ENCODE measurements at regions of chr3 and their contacts with region 1.

Region 1: DNA sequence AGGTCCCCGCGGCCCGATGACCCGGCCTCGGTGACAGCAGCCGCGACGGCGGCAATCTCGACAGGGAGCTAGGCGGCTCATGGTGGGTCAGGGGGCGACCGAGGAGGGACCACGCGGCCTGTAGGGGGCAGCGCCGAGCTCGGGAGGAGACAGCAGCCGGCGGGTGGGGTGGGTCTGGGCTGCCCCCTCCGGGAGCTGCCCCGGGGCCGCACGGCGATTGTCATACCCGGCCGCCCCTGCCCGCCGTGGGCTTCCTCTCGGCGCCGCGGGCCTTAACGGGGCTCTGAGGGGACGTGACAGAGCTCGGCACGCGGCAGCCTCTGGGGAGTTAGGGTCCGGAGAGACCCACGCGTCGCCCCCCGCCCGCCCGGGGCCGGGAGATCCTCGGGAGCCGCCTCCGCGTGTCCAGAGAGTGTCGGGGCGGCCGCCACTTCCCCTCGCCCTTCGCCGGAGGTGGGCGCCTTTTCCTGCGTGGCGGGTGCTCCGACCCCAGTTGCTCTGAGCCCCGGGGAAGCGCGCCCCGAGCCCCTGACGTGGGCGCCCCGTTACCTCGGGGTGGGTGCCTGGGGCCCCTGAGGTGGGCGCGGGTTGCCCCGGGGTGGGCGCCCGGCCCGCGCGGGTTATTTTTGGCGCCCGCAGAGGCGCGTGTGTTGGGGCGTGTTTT is 539 bp upstream of the PLCL2 start:
- DNase-seq: peak; percentile 84
- H3K4me3 Mint-ChIP-seq: peak overlapping the region; percentile 93
- H3K27ac Mint-ChIP-seq: peak overlapping the region; percentile 93
- H3K4me1 Mint-ChIP-seq: peaks cover 23% of the 10 kb centered on the region
- H3K27me3 Mint-ChIP-seq: no peaks in the 10 kb centered on the region

Region 2: DNA sequence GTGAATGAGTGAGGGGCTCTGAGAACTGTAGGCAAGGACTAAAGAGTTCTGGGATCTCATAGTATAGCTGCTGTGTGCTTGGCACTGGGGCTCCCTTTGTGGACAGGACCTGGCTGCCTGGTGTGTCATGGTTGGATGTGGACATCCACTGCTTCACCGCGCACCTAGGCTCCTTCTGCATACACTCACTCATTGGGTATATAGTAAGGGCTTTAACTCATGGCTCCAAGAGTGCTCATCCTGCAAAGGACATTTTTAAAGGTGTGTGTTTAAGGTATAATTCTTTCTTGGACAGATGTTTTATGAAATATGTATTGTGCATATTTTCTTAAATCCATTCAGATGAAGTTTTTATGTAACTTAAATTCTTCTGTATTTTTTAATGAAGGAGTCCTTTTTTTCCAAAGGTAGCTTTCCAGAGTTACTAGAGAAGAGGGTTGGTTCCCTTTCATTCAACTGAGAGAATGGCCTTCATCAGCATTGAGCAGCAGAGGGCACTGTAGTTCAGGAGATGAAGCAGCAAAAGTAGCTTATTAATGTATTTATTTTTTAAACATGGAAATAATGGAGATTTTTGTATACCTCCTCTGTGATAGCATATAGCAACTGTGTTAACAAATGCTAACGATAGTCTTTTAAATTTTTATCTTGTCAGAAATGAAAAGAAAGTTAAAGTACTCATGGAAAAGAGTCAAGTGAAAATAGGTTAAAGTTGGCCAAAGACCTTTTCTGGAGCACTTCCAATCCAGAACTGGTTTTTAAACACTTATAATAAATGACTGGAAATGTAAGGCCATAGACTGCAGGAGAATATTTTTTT is 594.0 kb before region 1 on chr3:
- CTCF ChIA-PET with region 1: no interaction called
- POLR2A ChIA-PET with region 1: no interaction called
- intact Hi-C with region 1: loop called (anchors 5 kb)
- DNase-seq: peak; percentile 70
- H3K4me3 Mint-ChIP-seq: peak overlapping the region; percentile 45
- H3K27ac Mint-ChIP-seq: peak overlapping the region; percentile 85
- H3K4me1 Mint-ChIP-seq: peaks cover 89% of the 10 kb centered on the region
- H3K27me3 Mint-ChIP-seq: no peaks in the 10 kb centered on the region

Region 3: DNA sequence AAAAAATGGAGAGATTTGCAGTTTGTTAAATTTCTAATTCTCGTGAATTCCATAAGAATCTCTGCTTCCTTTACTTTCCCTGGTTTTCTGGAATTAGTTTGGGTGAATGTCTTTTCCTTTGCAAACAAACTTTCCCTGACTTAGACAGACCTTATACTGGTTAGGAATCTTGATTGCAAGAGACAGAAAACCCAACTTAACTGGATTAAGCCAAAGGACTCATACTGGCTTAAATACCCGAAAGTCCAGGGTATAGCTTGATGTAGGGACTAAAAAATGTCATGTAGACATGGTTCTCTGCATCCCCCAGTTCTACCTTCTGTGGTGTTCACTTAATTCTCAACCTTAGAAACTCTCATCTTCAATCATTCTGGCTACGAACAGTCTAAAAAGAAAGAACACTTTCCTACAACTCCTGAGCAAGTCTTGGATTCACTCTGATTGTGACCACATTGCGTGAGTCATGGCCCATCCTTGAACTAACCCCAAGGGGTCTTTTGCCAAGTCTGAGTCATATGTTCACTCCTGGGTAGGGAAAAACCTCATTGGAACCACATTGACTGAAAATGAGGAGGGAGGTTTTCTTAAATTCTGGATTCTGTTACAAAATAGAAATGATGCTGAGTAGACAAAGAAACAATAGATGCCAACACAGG is 143.0 kb before region 1 on chr3:
- CTCF ChIA-PET with region 1: no interaction called
- POLR2A ChIA-PET with region 1: no interaction called
- intact Hi-C with region 1: no loop called
- DNase-seq: peak; percentile 38
- H3K4me3 Mint-ChIP-seq: no peak overlapping the region
- H3K27ac Mint-ChIP-seq: no peak overlapping the region
- H3K4me1 Mint-ChIP-seq: peaks cover 6% of the 10 kb centered on the region
- H3K27me3 Mint-ChIP-seq: peaks cover 2% of the 10 kb centered on the region

Region 4: DNA sequence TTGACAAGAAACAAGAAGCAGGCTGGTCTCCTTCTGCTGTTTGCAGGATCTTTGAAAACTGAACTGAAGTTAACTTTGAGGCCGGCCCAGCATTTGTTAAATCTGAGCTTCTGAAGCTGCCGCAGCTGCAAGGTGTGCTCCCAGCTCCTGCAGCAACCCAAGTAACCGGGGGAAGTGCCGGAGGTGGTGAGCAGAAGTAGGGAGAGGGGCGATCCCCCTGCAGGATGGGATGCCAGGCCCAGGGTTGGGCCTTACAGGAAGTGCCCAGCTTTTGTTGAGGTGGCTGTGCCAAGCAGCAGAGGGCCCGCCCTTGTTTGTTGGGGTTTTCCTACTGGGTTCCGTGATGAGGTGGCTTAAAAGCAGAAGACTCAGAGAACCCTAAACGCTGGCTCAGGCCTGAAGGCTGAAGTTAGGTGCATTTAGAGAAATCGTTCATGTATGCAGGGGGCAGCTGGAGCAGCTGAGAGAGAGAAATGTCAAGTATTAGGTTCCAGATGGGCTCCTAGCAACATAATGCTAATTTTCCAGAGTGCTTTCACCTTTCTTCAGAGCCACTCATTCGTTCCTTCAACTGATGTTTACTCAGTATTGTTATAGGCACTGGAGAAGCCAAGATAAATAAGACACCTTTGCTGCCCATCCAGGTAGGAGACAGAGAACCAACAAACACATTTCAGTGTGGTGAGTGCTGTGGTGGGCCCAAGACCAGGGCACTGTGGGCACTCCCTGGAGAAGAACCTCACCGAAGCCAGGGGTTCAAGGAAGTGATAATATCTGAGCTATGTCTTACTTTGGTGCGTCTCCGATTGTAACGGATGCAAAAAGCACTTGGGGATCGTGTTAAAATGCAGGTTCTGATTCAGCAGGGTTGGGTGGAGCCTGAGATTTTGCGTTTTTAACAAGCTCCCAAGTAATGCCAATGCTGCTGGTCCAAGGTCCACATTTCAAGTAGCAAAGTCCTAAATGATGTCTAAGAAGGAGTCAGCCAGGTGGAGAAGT is 41.6 kb before region 1 on chr3:
- CTCF ChIA-PET with region 1: interaction called, 25 read pairs
- POLR2A ChIA-PET with region 1: interaction called, 9 read pairs
- intact Hi-C with region 1: loop called (anchors 1 kb)
- DNase-seq: peak; percentile 89
- H3K4me3 Mint-ChIP-seq: peak overlapping the region; percentile 67
- H3K27ac Mint-ChIP-seq: peak overlapping the region; percentile 91
- H3K4me1 Mint-ChIP-seq: peaks cover 80% of the 10 kb centered on the region
- H3K27me3 Mint-ChIP-seq: no peaks in the 10 kb centered on the region

Region 5: DNA sequence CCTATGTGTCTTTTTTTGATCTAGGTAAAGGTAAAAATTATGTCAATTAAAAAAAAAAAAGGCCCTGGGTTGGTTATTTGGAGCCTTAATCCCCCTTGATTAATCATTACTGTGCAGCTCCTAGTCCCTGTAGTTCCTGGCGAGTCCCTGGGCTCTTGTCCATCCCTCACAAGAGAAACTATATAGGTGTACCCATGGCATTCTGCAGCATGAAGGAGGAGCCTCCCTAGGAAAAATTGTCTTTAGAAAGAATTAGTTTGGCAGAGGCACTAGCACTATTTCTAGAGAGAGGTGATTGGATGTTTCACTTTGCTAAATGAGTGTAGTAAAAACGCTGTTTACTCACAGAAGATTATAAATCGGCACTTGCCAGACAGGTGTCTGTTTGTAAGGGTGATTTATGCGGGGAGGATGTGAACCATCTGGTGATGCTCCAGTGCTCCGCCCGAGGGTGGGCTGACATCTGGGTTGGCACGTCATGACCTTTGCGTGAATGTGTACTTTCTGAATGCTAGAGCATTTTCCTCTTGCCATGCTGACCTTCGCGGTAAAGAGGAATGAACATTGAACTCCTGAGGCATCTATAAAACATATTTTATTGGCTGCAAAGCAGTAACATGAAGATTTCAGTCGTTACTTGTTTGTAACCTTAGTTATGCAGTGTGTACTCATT is 13.2 kb after region 1 on chr3:
- CTCF ChIA-PET with region 1: interaction called, 6 read pairs
- POLR2A ChIA-PET with region 1: interaction called, 8 read pairs
- intact Hi-C with region 1: loop called (anchors 1 kb)
- DNase-seq: peak; percentile 55
- H3K4me3 Mint-ChIP-seq: peak overlapping the region; percentile 26
- H3K27ac Mint-ChIP-seq: peak overlapping the region; percentile 57
- H3K4me1 Mint-ChIP-seq: peaks cover 86% of the 10 kb centered on the region
- H3K27me3 Mint-ChIP-seq: no peaks in the 10 kb centered on the region

Region 6: DNA sequence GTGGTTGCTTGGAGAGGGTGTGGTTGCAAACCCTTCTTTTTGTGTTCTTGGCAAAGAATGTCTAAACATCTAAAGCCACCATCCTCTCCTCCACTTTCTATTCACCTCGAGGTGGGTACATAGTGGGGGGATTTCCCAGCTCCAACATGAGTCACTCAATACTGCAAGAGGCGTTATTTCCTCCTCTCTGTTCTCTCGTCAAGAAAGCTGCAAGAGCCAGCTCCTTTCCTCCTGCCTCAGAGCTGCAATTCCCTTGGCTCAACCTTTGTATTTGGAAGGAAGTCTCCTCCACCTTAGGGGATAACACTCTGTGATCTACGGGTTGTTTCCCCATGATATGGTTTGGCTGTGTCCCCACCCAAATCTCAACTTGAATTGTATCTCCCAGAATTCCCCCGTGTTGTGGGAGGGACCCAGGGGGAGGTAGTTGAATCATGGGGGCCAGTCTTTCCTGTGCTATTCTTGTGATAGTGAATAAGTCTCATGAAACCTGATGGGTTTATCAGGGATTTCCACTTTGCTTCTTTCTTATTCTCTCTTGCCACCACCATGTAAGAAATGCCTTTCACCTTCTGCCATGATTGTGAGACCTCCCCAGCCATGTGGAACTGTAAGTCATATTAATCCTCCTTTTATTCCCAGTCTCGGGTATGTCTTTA is 138.9 kb after region 1 on chr3:
- CTCF ChIA-PET with region 1: interaction called, 20 read pairs
- POLR2A ChIA-PET with region 1: no interaction called
- intact Hi-C with region 1: loop called (anchors 2 kb)
- DNase-seq: peak; percentile 72
- H3K4me3 Mint-ChIP-seq: peak overlapping the region; percentile 52
- H3K27ac Mint-ChIP-seq: peak overlapping the region; percentile 87
- H3K4me1 Mint-ChIP-seq: peaks cover 73% of the 10 kb centered on the region
- H3K27me3 Mint-ChIP-seq: no peaks in the 10 kb centered on the region

Region 7: GRCh38 chr3:17233398-17233800 is 349.2 kb after region 1 on chr3:
- CTCF ChIA-PET with region 1: interaction called, 23 read pairs
- POLR2A ChIA-PET with region 1: no interaction called
- intact Hi-C with region 1: loop called (anchors 1 kb)
- DNase-seq: peak; percentile 25
- H3K4me3 Mint-ChIP-seq: no peak overlapping the region
- H3K27ac Mint-ChIP-seq: no peak overlapping the region
- H3K4me1 Mint-ChIP-seq: peaks cover 21% of the 10 kb centered on the region
- H3K27me3 Mint-ChIP-seq: no peaks in the 10 kb centered on the region

Region 8: DNA sequence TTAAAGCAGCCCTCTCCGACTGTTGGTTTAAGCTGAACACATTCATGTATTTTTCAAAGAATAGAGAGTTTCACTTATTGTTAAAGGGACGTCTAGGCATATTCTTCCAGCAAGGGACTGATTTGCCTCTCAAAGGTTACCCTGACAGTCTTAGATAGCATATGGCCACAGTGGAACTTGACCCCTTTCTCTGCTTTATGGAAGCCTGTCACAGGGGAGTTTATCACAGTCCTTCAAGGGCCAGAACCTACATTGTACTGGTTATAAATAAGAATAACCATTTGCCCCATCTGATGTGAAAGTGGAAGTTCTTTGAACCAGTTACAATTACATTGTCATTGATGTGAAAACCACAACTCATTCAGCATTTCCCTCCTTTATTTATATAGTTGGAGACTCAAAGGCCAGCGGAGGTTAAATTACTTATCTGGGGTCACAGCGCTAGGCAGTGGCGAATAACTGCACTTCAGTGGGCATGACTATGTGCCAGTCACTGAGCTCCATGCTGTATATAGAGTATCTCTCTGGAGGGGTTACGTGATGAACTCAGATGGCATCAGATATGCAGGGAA is 918.7 kb after region 1 on chr3:
- CTCF ChIA-PET with region 1: no interaction called
- POLR2A ChIA-PET with region 1: no interaction called
- intact Hi-C with region 1: no loop called
- DNase-seq: no peak
- H3K4me3 Mint-ChIP-seq: no peak overlapping the region
- H3K27ac Mint-ChIP-seq: no peak overlapping the region
- H3K4me1 Mint-ChIP-seq: peaks cover 6% of the 10 kb centered on the region
- H3K27me3 Mint-ChIP-seq: peaks cover 2% of the 10 kb centered on the region

Measured in activated CD4-positive, alpha-beta memory T cell treated with anti-CD3 and anti-CD28 coated beads for 36 hours (primary cell).